HEK293 (cell line): ENCODE measurements at regions of chr19 and their contacts with region 1.

Region 1: GRCh38 chr19:45079063-45079910 is at the start of gene GEMIN7:
- H3K4me3 ChIP-seq: peak within 1 kb of the TSS; percentile 75
- H3K27ac ChIP-seq: peak within 1 kb of the TSS; percentile 62; the same call in 1 of the 2 replicates
- H3K4me1 ChIP-seq: peaks cover 18% of the 10 kb centered on the region
- CTCF ChIP-seq: peak; percentile 35; the same call in 1 of the 2 replicates

Region 2: DNA sequence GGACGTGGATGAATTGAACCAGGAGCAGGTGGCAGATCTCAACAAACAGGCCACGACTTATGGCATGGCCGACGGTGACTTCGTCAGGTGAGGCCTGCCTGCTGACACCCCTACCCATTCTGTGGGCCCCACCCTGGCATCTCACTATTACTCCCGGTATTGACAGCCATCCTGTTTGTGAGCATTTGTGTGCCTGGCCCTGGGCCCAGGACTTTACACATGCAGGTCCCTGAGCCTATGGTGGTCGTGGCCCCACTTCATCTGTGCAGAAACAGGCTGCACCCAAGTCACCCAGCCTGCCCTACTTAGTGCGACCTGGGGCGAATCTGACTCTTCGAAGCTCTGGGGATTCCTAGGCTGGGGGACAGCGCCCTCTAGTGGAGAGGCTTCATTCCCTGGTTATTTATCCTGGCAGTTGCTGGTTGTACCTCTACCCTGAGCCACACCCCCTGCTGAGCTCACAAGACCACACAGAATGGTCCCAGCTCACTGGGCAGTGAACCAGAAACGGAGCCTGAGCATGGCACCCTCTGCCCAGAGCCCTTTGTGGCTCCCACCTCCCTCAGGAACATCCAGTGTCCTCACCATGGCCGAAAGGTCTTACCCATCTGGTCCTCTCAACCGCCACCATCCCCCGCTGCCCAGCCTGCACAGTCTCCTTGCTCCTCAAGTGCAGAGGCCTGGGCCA is 19.9 kb before region 1 on chr19:
- CTCF ChIA-PET with region 1: interaction called, 16 read pairs
- POLR2A ChIA-PET with region 1: interaction called, 4 read pairs
- H3K4me3 ChIP-seq: no peak overlapping the region
- H3K27ac ChIP-seq: no peak overlapping the region
- H3K4me1 ChIP-seq: no peaks in the 10 kb centered on the region
- CTCF ChIP-seq: peak; percentile 81; the same call in 1 of the 2 replicates

Region 3: DNA sequence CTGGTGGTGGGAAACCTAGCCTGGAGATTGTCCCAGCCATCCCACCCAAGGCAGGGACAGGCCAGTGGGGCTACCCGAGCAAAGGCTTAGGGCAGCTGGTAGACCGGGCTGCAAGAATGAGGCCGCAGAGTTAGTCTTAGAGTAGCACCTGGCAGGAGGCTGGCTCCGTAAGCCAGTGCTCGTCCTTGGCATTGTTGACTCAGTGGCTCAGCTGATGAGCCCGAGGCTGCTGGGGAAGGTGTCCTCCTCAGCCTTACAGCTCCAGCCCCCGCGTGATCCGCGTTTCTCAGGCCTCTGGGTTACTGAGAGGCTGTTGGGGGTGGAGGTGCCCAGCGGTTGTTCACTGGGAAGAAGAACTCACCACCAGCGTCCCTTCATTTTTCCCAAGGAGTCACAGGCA is 38.4 kb after region 1 on chr19:
- CTCF ChIA-PET with region 1: no interaction called
- POLR2A ChIA-PET with region 1: no interaction called
- H3K4me3 ChIP-seq: no peak overlapping the region
- H3K27ac ChIP-seq: 0 out of 2 replicates have a peak overlapping the region, but pooled peaks have one; percentile 31
- H3K4me1 ChIP-seq: peaks cover 26% of the 10 kb centered on the region
- CTCF ChIP-seq: no peak